HEK293T (cell line): ENCODE measurements at regions of chr6 and their contacts with region 1.

Region 1: DNA sequence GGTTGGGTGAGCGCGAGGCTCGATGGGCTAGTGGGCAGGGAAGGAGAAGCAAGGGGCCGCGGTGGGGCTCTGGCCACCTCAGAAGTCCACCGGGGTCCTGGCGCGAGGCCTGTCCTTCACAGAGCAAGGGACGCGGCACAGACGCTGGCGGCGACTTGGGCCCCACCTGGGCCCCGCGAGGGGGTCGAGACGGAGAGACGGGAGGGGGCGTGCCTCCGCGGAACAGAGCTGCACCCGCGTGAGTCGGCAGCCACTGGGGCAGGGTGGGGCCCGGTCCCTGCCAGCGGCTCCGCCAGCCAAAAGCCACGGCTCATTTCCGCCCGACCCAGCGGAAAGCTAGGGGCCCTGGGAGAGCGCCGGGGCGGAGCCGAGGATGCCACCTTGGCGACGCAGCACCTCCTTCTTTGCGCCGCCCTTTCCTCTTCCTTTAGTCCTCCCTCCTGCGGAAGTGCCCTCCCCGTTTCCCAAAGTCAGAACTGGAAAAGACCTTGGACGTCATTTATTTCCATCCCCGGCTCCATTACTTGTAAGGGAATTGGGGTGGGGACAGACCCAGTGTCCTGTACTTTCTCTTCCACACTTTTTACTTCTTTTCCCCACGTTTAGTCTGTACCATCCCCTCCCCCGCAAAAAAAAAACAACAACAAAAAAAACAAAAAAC is at the start of gene CUL7:
- DNase-seq: peak; percentile 95

Region 2: GRCh38 chr6:42907336-42907735 is 146.3 kb before region 1 on chr6:
- CTCF ChIA-PET with region 1: no interaction called
- POLR2A ChIA-PET with region 1: no interaction called
- DNase-seq: no peak

Region 3: GRCh38 chr6:42928986-42929820 is 124.5 kb before region 1 on chr6 and contains the start of gene CNPY3:
- CTCF ChIA-PET with region 1: no interaction called
- POLR2A ChIA-PET with region 1: interaction called, 16 read pairs
- DNase-seq: peak; percentile 90

Region 4: GRCh38 chr6:42978839-42979522 is 74.7 kb before region 1 on chr6 and contains the start of gene PEX6:
- CTCF ChIA-PET with region 1: no interaction called
- POLR2A ChIA-PET with region 1: interaction called, 19 read pairs
- DNase-seq: peak; percentile 84

Region 5: GRCh38 chr6:43013843-43014433 is 39.7 kb before region 1 on chr6 and contains the starts of genes KLHDC3 and MEA1:
- CTCF ChIA-PET with region 1: no interaction called
- POLR2A ChIA-PET with region 1: interaction called, 22 read pairs
- DNase-seq: peak; percentile 99

Region 6: DNA sequence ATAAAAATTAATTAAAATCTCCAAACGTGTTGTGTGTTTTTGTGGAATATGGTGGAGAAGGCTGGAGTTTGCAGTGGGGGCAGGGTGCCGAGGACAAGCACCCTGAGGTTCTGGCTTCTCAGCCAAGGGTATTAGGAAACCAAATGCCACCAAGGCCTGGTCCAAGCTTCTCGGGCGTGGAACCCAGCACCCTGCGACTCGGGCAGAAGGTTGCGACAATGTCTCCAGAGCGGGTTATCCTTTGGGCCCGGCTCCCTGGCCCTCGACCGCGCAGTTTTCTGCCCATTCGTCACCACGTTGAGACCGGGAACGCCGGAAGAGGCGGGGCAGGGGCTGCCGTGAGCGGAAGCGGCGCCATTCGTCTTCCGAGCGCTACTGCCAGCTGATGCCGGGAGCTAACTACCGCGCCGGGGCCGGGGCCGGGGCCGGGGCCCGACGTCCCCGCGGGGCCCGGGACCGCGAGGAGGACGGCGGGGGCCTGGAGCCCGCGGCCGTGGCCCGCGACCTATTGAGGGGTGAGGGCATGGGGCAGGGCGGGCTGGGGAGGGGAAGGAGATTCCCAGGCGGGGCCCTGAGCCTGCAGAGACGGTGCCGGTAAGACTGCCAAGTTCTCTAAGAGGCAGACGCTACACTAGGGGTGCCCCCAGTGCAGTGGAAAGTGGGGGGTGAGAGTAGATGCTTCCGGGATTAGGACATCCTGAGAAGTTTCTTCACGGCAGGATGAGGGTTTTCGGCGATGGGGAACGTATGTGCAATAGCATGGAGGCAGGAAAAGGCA is 32.2 kb before region 1 on chr6 and contains the start of gene RRP36:
- CTCF ChIA-PET with region 1: no interaction called
- POLR2A ChIA-PET with region 1: interaction called, 26 read pairs
- DNase-seq: peak; percentile 85

Region 7: GRCh38 chr6:43040542-43041257 is 13.0 kb before region 1 on chr6:
- CTCF ChIA-PET with region 1: no interaction called
- POLR2A ChIA-PET with region 1: interaction called, 15 read pairs
- DNase-seq: no peak

Region 8: DNA sequence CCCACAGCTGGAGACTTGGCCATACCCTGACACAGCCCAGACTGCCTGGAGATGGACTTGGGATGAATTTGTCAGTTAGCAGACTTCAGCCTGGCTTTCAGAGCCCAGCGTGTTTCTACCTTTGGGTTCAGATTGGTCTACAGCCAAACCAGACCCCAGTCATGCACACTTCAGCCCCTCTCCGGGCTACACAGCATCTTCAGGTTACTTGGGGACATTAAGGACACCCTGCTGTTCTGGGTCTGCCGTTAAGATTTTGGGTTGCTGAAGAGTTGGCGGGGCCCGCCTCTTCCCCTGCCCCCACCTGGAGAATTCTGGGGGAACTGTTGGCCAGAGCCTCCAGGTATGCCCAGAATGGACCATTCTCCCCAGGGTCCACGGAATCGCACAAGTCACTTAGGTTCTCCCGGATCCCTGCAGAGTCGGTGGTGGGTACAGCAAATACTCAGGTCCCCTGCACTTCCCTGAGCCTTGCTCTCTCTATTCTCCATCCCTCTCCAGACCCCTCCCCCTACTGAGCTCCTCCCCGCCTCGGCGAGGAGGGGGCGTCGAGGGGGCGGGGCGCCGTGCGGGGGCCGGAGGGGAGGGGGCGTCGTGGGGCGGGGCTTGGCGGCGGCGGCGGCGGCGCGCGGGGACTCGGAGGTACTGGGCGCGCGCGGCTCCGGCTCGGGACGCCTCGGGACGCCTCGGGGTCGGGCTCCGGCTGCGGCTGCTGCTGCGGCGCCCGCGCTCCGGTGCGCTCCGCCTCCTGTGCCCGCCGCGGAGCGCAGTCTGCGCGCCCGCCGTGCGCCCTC is 22.2 kb after region 1 on chr6 and contains the start of gene PTK7:
- CTCF ChIA-PET with region 1: no interaction called
- POLR2A ChIA-PET with region 1: interaction called, 12 read pairs
- DNase-seq: peak; percentile 83